Mucosa of descending colon (tissue), 3 donors: ENCODE measurements at regions of chr14 and their contacts with region 1.

Region 1: GRCh38 chr14:64636208-64636979 is 67.8 kb upstream of the PLEKHG3 start:
- DNase-seq: peak; percentile 67 to 85 (median 80)
- ATAC-seq: peak; percentile 81
- H3K4me3 ChIP-seq: no peak overlapping the region
- H3K4me1 ChIP-seq: peaks cover 14% of the 10 kb centered on the region
- CTCF ChIP-seq: peak; percentile 75

Region 2: DNA sequence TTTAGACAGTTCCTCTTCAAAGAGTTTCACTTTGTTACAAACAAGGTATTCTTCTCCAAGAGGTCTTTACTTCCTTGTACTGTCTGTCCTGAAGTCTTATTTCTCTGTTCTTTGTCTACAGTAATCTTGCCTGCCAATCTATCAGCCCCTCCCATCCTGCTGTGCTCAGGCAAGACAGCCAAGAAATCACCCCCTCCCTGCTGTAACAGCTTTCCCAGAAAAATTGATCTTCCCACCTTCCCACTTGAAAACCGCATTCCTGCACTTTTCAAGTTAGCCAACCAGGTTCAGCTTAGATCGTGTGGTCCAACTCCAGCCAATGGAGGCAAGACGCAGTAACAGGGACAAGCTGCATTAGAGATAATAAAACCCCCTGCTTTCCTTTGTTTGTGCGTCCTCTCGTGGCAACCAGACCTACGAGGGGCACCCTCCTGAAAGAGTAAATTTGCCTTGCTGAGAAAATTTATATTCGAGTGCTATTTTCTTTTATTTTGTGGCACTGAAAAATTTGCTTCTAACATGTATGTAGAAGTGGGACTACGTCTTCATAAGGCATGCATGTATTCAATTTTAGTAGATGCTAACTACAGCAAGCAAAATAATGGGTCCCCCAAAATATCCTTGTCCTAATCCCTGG is 295.7 kb before region 1 on chr14:
- intact Hi-C with region 1: loop called in 1 of 2 experiments (anchors 5 kb)
- DNase-seq: no peak
- ATAC-seq: no peak
- H3K4me3 ChIP-seq: no peak overlapping the region
- H3K4me1 ChIP-seq: no peaks in the 10 kb centered on the region
- CTCF ChIP-seq: no peak

Region 3: DNA sequence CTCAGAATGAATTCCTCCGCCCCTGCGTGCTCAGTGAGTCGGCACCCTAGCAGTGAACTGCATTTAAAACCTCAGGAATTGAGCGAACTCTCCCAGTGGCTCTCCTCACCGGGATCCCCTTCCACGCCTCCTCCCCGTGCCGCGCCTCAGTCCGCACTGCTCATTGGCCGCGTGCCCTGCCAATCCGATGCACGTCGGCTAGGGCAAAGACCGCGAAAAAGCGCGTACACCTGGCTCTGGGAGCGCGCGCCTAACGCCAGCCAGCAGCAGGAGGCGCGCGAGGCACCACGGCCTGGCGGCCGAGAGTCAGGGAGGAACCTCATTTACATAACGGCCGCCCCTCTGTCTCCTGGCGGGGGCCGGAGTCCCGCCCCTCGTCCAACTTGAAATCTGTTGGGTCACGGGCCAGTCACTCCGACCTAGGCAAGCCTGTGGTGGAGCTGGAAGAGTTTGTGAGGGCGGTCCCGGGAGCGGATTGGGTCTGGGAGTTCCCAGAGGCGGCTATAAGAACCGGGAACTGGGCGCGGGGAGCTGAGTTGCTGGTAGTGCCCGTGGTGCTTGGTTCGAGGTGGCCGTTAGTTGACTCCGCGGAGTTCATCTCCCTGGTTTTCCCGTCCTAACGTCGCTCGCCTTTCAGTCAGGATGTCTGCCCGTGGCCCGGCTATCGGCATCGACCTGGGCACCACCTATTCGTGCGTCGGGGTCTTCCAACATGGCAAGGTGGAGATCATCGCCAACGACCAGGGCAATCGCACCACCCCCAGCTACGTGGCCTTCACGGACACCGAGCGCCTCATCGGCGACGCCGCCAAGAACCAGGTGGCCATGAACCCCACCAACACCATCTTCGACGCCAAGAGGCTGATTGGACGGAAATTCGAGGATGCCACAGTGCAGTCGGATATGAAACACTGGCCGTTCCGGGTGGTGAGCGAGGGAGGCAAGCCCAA is 95.9 kb before region 1 on chr14 and contains the start of gene HSPA2:
- intact Hi-C with region 1: loop called (anchors 5 to 10 kb)
- DNase-seq: peak; percentile 98 to 100 (median 99)
- ATAC-seq: peak; percentile 95
- H3K4me3 ChIP-seq: peak within 1 kb of the TSS; percentile 23
- H3K4me1 ChIP-seq: no peaks in the 10 kb centered on the region
- CTCF ChIP-seq: peak; percentile 85
- total RNA-seq, gene HSPA2: 28.3 to 99.5 (median 58.2) TPM